Common myeloid progenitor, CD34-positive (primary cell): ENCODE measurements at regions of chr3 and their contacts with region 1.

Region 1: DNA sequence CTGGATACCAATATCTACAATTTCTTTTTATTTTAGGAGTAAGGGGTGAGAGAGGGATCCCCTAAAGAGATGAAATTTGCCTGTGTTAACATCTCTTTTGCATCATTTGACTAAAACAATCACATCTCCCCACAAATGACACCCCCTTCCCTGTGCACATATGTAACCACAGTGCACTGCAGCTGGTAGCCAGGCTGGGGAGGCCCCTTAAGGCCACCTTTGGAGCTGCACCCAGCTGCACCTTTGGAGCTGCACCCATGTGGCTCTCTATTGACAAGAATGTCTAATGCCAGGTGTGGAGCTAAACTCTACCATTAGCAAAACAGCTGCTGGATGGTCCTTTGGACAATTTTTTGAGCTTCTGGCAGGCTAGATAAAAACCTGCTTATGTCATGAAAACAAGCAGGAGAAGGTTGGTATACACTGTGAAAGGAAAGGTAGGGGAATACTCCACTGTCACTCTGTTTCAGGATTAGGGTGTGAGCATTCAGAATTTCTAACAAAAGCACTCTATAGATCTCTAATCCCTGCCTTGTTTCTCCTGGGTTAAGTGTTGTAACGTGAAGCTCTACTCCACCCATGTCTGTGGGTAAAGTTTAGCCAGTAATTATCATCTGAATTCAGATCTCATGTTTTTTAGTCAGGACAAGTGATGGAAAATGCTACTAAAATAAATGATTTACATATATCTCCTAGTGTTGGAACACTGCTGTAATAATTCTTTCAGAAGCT is 52.1 kb downstream of the TFG start:
- DNase-seq: peak in 1 of 3 donors; percentile 6
- H3K4me3 ChIP-seq: no peak overlapping the region
- H3K27ac ChIP-seq: no peak overlapping the region
- H3K4me1 ChIP-seq: peaks cover 0 to 6% (median 0%) of the 10 kb centered on the region in 4 experiments
- H3K27me3 ChIP-seq: no peaks in the 10 kb centered on the region

Region 2: GRCh38 chr3:100746092-100746491 is 15.3 kb before region 1 on chr3:
- CTCF ChIA-PET with region 1: interaction called, 10 read pairs
- POLR2A ChIA-PET with region 1: no interaction called
- DNase-seq: no peak
- H3K4me3 ChIP-seq: no peak overlapping the region
- H3K27ac ChIP-seq: no peak overlapping the region
- H3K4me1 ChIP-seq: no peaks in the 10 kb centered on the region
- H3K27me3 ChIP-seq: no peaks in the 10 kb centered on the region

Region 3: DNA sequence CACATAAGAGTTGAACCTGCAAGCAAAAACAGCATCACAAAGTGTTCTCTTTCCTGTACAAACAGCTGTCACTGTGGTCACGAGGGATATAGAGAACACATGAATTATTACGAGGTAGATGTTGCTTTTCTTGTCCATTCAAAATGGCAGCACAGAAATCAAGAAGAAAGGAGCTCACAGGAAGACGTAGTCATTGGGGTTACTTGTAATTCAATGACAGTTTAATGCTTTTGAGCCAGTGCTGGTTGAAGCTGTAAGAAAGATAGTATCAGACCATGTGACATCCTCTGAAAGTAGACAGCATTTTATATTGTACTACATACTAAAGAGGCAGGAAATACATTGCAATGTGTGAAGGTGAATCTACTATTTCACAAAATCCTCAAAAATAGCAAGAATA is 91.5 kb after region 1 on chr3:
- CTCF ChIA-PET with region 1: no interaction called
- POLR2A ChIA-PET with region 1: no interaction called
- DNase-seq: peak in 2 of 3 donors; percentile 61 to 78
- H3K4me3 ChIP-seq: no peak overlapping the region
- H3K27ac ChIP-seq: no peak overlapping the region
- H3K4me1 ChIP-seq: peaks cover 0 to 6% (median under 1%) of the 10 kb centered on the region in 4 experiments
- H3K27me3 ChIP-seq: no peaks in the 10 kb centered on the region